ENCODE measurements at regions of chr4 and their contacts with region 1.

Region 1: GRCh38 chr4:90025248-90025647 is 101.9 kb upstream of the CCSER1 start:
- DNase-seq: peak; percentile 50
- ATAC-seq: no peak
- H3K4me3 ChIP-seq: no peak overlapping the region
- H3K27ac ChIP-seq: no peak overlapping the region
- H3K4me1 ChIP-seq: no peaks in the 10 kb centered on the region; the same call in 1 of the 2 replicates
- H3K27me3 ChIP-seq: 0 out of 2 replicates have a peak, but pooled peaks cover 7% of the 10 kb centered on the region
- CTCF ChIP-seq: peak; percentile 75

Region 2: GRCh38 chr4:89855236-89855635 is 170.0 kb before region 1 on chr4:
- CTCF ChIA-PET with region 1: no interaction called
- POLR2A ChIA-PET with region 1: no interaction called
- intact Hi-C with region 1: no loop called
- DNase-seq: no peak
- ATAC-seq: no peak
- H3K4me3 ChIP-seq: no peak overlapping the region
- H3K27ac ChIP-seq: no peak overlapping the region
- H3K4me1 ChIP-seq: no peaks in the 10 kb centered on the region
- H3K27me3 ChIP-seq: no peaks in the 10 kb centered on the region; the same call in 1 of the 2 replicates
- CTCF ChIP-seq: no peak

Region 3: GRCh38 chr4:89868999-89869589 is 156.2 kb before region 1 on chr4:
- CTCF ChIA-PET with region 1: no interaction called
- POLR2A ChIA-PET with region 1: no interaction called
- intact Hi-C with region 1: loop called (anchors 1 kb)
- DNase-seq: peak; percentile 32
- ATAC-seq: no peak
- H3K4me3 ChIP-seq: no peak overlapping the region
- H3K27ac ChIP-seq: no peak overlapping the region
- H3K4me1 ChIP-seq: no peaks in the 10 kb centered on the region
- H3K27me3 ChIP-seq: peaks cover 34% of the 10 kb centered on the region
- CTCF ChIP-seq: peak; percentile 71

Region 4: GRCh38 chr4:89898304-89898716 is 126.9 kb before region 1 on chr4:
- CTCF ChIA-PET with region 1: no interaction called
- POLR2A ChIA-PET with region 1: no interaction called
- intact Hi-C with region 1: loop called (anchors 1 kb)
- DNase-seq: no peak
- ATAC-seq: no peak
- H3K4me3 ChIP-seq: no peak overlapping the region
- H3K27ac ChIP-seq: no peak overlapping the region
- H3K4me1 ChIP-seq: no peaks in the 10 kb centered on the region
- H3K27me3 ChIP-seq: peaks cover 57% of the 10 kb centered on the region
- CTCF ChIP-seq: no peak

Region 5: DNA sequence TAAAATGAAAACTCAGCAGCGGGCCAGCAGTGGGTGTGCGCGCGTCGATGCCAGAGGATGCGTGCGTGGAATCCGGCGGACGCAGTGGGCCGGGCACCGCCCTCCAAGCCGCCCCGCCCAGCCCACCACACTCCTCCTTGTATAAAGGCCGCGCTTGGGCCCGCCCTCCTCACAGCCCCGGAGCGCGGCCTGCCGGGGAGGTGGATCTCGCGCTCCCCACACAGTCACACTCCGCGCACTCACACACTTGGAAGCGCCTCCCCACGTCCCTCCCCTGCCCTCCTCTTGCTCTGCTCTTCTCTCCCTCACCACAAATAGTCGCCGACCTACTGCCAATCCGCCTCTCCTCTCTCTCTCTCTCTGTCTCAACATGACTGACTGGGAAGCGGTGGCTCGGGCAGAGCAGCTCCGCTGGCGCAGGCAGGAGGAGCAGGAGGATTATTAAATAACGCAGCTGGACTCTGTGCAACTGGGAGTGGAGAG is 102.0 kb after region 1 on chr4 and contains the start of gene CCSER1:
- CTCF ChIA-PET with region 1: no interaction called
- POLR2A ChIA-PET with region 1: no interaction called
- intact Hi-C with region 1: loop called (anchors 5 kb)
- DNase-seq: peak; percentile 78
- ATAC-seq: peak; percentile 79
- H3K4me3 ChIP-seq: peak within 1 kb of the TSS; percentile 76
- H3K27ac ChIP-seq: 0 out of 2 replicates have a peak within 1 kb of the TSS, but pooled peaks have one; percentile 12
- H3K4me1 ChIP-seq: peaks cover 8% of the 10 kb centered on the region
- H3K27me3 ChIP-seq: peaks cover 32% of the 10 kb centered on the region; the same call in 1 of the 2 replicates
- CTCF ChIP-seq: 0 out of 2 replicates have a peak, but pooled peaks have one; percentile 8
- total RNA-seq, gene CCSER1: 6.0 and 10.1 TPM in 2 replicates

Region 6: GRCh38 chr4:90293320-90293719 is 268.1 kb after region 1 on chr4:
- CTCF ChIA-PET with region 1: no interaction called
- POLR2A ChIA-PET with region 1: no interaction called
- intact Hi-C with region 1: loop called (anchors 1 kb)
- DNase-seq: peak; percentile 32
- ATAC-seq: no peak
- H3K4me3 ChIP-seq: no peak overlapping the region
- H3K27ac ChIP-seq: no peak overlapping the region
- H3K4me1 ChIP-seq: no peaks in the 10 kb centered on the region
- H3K27me3 ChIP-seq: no peaks in the 10 kb centered on the region
- CTCF ChIP-seq: peak; percentile 21; the same call in 1 of the 2 replicates